ENCODE measurements at regions of chr3 and their contacts with region 1.

Region 1: GRCh38 chr3:58994746-58995330 is 55.0 kb downstream of the CFAP20DC start:
- DNase-seq: peak; percentile 23
- ATAC-seq: peak; percentile 86
- H3K4me3 ChIP-seq: no peak overlapping the region
- H3K27ac ChIP-seq: no peak overlapping the region
- H3K4me1 ChIP-seq: no peaks in the 10 kb centered on the region
- H3K27me3 ChIP-seq: no peaks in the 10 kb centered on the region
- CTCF ChIP-seq: peak; percentile 65 to 75 (median 72)
- EP300 ChIP-seq: no peak
- POLR2A ChIP-seq: no peak
- RAD21 ChIP-seq: peak; percentile 73

Region 2: DNA sequence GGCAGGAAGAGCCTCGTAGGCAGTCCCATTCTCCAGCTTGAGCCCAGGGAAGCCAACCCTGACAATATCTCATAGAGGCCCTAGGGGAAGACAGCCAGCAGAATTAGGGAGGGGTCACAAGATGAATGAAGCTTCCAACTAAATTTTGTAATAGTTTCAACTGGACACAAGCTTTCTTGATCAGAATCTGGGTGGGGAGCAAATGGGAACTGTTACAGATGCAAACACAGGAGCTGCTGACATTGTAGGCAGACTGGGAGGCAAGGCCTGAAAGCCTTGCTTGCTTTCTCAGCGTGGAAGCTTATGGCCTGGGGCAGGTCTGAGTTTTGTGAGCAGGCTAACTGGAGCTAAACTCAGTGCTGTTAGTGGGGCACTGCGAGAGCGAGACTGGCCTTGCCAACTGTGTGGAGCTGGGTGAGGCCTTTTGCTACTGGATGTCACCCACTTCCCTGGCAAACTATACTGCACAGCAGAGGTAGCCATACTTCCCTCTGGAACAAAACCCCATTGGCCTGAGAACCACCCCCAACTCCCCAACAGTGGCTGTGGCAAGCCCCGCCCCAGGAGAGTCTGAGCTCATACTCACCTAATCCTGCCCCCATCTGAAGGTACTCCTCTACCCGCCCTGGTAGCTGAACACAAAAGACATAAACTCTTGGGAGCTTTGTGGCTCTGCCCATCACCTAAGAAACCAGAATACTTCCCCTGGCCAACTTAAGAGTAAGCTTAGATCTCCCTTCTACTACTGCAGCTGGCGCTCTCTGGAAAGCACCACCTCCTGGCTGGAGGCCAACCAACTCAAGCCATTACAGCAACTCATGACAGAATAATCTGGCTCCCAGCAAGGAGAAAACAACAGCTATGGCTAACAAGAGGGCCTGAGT is 12.0 kb after region 1 on chr3:
- CTCF ChIA-PET with region 1: interaction called, 11 read pairs
- POLR2A ChIA-PET with region 1: no interaction called
- RAD21 ChIA-PET with region 1: interaction called, 7 read pairs
- SMC1A ChIA-PET with region 1: interaction called, 23 read pairs
- in situ Hi-C with region 1: no loop called
- intact Hi-C with region 1: no loop called
- DNase-seq: no peak
- ATAC-seq: peak; percentile 84
- H3K4me3 ChIP-seq: no peak overlapping the region
- H3K27ac ChIP-seq: no peak overlapping the region
- H3K4me1 ChIP-seq: no peaks in the 10 kb centered on the region
- H3K27me3 ChIP-seq: no peaks in the 10 kb centered on the region
- CTCF ChIP-seq: no peak
- EP300 ChIP-seq: no peak
- POLR2A ChIP-seq: no peak
- RAD21 ChIP-seq: no peak

Region 3: DNA sequence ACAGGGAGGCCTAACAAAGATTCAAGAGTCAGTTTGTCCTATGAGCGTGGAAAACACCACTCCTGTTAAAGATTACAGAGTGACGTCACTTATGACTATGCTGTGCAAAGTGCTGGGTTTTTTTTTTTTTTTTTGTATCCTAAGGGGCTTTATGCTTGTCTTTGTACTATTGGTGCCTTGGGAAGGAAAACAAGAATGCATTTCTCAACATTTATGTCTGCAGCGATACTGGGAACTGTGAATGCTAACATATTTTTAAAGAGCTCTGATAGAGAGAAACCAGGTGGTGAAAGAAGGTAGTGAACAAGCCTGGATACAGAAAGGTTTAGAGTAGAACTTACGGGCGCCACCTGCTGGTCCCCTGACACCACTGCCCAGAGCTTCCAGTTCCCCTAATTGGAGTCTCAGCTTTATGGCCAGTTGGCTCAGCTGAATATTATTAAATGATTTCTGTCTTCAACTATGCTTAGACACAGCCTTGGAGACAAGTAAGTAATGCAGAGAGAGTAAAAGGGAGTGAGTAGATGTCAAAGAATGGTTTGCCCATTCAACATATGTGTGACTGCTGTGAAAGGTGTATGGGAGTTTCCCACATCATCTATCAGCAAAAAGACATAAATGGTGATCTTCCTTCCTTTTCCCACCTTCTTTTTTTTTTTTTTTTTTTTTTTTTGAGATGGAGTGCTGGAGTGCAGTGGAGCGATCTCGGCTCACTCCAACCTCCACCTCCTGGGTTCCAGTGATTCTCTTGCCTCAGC is 862.9 kb after region 1 on chr3:
- CTCF ChIA-PET with region 1: interaction called, 3 read pairs
- POLR2A ChIA-PET with region 1: no interaction called
- RAD21 ChIA-PET with region 1: interaction called, 7 read pairs
- SMC1A ChIA-PET with region 1: interaction called, 3 read pairs
- in situ Hi-C with region 1: no loop called
- intact Hi-C with region 1: loop called (anchors 10 kb)
- DNase-seq: peak; percentile 17
- ATAC-seq: peak; percentile 100
- H3K4me3 ChIP-seq: no peak overlapping the region
- H3K27ac ChIP-seq: no peak overlapping the region
- H3K4me1 ChIP-seq: no peaks in the 10 kb centered on the region
- H3K27me3 ChIP-seq: no peaks in the 10 kb centered on the region; a peak in 1 of 4 replicates
- CTCF ChIP-seq: peak; percentile 89 to 96 (median 95)
- EP300 ChIP-seq: no peak
- POLR2A ChIP-seq: no peak
- RAD21 ChIP-seq: peak; percentile 85